ENCODE measurements at regions of chr3 and their contacts with region 1.

Region 1: GRCh38 chr3:94184781-94185180 is 121.9 kb downstream of the NSUN3 start:
- DNase-seq: peak; percentile 71
- ATAC-seq: peak; percentile 44
- H3K4me3 ChIP-seq: no peak overlapping the region
- H3K27ac ChIP-seq: peak overlapping the region; percentile 40
- H3K4me1 ChIP-seq: peaks cover 21% of the 10 kb centered on the region
- H3K27me3 ChIP-seq: no peaks in the 10 kb centered on the region
- CTCF ChIP-seq: no peak

Region 2: GRCh38 chr3:94173676-94174434 is 10.9 kb before region 1 on chr3:
- CTCF ChIA-PET with region 1: no interaction called
- POLR2A ChIA-PET with region 1: no interaction called
- intact Hi-C with region 1: loop called (anchors 1 kb)
- DNase-seq: peak; percentile 76
- ATAC-seq: peak; percentile 94
- H3K4me3 ChIP-seq: peak overlapping the region; percentile 6; the same call in 1 of the 2 replicates
- H3K27ac ChIP-seq: peak overlapping the region; percentile 55
- H3K4me1 ChIP-seq: peaks cover 26% of the 10 kb centered on the region
- H3K27me3 ChIP-seq: no peaks in the 10 kb centered on the region
- CTCF ChIP-seq: no peak

Region 3: GRCh38 chr3:94226078-94226477 is 41.3 kb after region 1 on chr3:
- CTCF ChIA-PET with region 1: no interaction called
- POLR2A ChIA-PET with region 1: no interaction called
- intact Hi-C with region 1: loop called (anchors 2 kb)
- DNase-seq: peak; percentile 84
- ATAC-seq: peak; percentile 94
- H3K4me3 ChIP-seq: no peak overlapping the region
- H3K27ac ChIP-seq: peak overlapping the region; percentile 61
- H3K4me1 ChIP-seq: peaks cover 18% of the 10 kb centered on the region
- H3K27me3 ChIP-seq: no peaks in the 10 kb centered on the region
- CTCF ChIP-seq: no peak

Measured in PC-3 (cell line).